ENCODE measurements at regions of chr7 and their contacts with region 1.

Region 1: DNA sequence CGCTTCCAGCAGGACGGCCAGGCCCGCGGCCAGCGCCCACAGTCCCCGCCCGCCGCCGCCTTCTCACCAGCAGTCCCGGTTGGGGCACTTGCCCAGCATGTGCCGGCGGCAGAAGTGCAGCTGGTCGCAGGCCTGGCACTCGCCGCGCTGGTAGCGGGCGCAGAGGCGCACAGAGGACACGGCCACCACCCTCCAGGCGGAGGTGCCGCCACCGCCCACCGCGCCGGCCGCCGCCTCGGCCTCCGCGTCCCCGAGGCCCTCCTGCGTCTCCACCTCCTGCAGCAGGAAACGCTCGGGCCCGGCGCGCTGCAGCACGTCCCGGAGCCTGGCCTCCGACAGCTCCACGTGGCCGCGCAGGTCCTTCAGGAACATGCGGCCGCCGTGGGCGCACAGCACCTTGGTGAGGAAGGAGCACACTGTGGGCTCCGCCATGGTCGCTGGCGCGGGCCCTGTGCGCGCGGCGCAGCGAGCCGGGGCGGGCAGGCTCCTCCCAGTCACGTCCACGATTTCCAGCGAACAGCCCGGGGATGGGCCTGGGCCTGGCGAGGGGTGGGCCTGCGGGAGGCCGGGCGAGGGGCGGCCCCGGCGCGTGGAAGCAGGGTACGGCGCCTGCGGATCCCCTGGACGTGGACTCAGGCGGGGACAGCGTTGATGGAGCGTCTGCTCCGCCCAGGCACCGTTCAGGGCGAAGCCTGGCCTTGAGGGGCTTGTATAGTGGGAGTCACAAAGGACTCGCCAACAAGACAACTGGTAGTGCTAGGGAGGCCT is at the start of gene ZC3HAV1L:
- DNase-seq: peak; percentile 35 to 87
- H3K4me3 ChIP-seq: peak within 1 kb of the TSS; percentile 57
- CTCF ChIP-seq: no peak
- POLR2A ChIP-seq: no peak
- total RNA-seq, gene ZC3HAV1L: 16.2 to 47.4 (median 30.6) TPM

Region 2: DNA sequence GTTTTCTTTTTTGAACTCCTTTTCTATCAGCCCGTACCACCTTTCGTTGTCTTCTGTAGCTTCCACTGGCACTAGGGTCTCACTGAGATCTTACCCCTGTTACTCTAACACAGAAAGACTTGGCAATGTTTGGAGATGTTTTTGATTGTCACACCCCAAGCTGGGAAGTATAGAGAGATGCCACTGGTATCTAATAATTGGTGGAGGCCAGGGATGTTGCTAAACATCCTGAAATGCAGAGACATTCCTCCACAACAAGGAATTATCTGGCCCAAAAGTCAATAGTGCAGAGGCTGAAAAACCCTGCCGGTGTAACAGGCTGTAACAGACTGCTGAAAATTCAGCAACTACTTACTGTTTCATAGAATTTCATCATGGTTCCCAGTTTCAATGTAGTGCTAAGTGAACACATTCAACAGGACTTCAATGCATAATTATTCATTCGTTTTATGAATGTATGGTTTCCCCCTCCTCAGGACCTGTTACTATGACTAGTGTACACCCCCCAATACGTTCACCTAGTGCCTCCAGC is 459.8 kb before region 1 on chr7:
- intact Hi-C with region 1: no loop called
- DNase-seq: no peak
- H3K4me3 ChIP-seq: no peak overlapping the region
- CTCF ChIP-seq: no peak
- POLR2A ChIP-seq: no peak

Region 3: GRCh38 chr7:139095194-139095659 is 59.5 kb after region 1 on chr7:
- intact Hi-C with region 1: loop called (anchors 2 kb)
- DNase-seq: peak in 1 of 2 donors; percentile 28
- H3K4me3 ChIP-seq: no peak overlapping the region
- CTCF ChIP-seq: no peak
- POLR2A ChIP-seq: no peak

Measured in lower leg skin (tissue), 4 donors.